ENCODE measurements at regions of chr10 and their contacts with region 1.

Region 1: DNA sequence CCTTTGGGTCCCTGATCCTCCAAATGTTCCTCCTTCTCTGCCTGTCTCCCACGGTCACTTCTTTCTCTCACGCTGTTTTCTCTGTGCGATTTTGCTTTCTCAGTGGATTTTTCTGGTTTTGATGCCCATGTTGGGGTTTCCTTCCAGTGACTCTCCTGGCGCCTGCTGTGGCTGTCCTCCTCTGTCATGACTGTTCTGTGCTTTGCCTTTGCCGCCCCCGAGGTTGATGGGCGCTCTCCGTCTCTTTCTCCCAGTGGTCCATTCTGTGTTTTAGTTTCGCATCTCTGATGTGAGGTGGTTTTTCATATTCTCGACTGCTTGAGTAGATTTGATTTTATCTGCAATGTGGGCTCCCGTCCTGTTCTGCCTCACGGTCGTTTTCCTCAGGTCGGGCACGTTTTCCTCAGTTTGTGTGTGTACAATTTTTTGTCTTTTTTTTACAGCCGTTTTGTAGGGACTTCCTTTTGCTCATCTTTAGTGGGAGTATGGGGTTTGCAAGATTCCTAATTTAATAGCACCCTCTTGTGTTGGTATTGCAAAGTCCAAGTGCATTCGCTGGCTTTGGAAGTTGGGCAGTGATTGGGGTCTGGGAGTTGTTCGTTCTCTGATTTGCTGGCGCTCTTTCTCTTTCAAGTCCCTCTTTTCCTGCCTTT is 100.0 kb downstream of the INPP5A start:
- DNase-seq: no peak
- ATAC-seq: peak; percentile 75

Region 2: DNA sequence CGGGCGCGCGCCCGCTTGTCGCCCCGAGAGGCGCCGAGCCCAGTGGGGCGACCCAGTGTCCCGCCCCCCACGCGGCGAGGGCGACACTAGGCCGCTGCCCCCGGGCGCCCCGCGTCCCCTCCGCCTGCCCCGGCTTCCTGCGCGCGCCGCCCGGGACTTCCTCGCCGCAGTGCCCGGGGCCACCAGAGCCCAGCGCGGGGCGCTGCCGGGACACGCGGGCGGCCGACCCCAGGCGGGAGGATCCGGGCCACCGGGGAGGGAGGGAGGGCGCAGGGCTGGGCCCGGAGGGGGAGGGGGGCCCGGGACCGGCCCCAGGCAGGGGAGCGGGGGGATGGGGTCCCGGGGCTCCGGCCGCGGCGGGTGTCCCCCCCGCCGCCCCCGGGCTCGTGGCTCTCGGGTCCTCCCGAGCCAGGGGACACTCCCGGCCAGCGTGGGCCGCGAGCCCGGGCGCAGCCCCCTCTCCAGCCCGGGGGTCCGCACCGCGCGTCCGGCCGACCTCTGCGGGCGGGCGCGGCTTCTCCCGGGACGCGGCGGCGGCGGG is 241.0 kb before region 1 on chr10:
- intact Hi-C with region 1: loop called (anchors 10 kb)
- DNase-seq: peak; percentile 76
- ATAC-seq: peak; percentile 48

Region 3: GRCh38 chr10:132443605-132443982 is 194.0 kb before region 1 on chr10:
- intact Hi-C with region 1: no loop called
- DNase-seq: no peak
- ATAC-seq: no peak

Region 4: GRCh38 chr10:132458593-132459300 is 178.9 kb before region 1 on chr10:
- intact Hi-C with region 1: loop called (anchors 1 kb)
- DNase-seq: peak; percentile 81
- ATAC-seq: peak; percentile 68

Region 5: DNA sequence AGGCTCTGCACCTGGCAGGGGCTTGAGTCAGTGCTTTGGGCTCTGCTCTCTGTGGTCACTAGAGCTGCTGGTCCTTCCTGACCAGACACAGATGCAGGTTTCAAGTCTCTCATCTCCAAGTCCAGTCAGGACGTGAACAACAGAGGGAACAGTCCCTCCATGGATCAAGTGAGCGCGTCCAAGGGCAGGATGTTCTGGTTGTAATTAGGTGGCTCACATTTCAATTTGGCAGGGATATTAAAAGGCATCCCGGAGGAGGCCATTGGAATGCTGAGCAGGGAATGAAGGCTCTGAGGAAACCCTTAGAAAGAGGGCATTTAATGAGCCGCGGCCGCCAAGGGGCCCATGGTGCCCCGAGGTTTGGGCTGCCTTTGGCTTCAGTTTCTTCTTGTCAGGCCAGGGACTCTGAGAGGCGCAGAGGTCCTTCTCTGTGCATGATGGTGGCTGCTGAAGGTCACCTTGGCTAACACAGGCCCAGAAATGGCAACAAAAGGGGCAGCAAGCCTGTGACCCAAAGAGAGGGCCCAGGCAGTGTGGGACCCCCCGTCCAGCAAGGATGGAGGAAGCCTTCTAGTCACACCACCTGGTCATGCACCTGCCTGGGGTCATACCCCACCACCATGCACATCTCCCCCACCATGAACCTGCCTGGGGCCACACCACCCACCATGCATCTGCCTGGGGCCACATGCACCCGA is 130.7 kb before region 1 on chr10:
- intact Hi-C with region 1: loop called (anchors 2 kb)
- DNase-seq: peak; percentile 51
- ATAC-seq: peak; percentile 45

Region 6: GRCh38 chr10:132516771-132517725 is 120.6 kb before region 1 on chr10:
- intact Hi-C with region 1: loop called (anchors 5 kb)
- DNase-seq: peak; percentile 94
- ATAC-seq: peak; percentile 81

Region 7: DNA sequence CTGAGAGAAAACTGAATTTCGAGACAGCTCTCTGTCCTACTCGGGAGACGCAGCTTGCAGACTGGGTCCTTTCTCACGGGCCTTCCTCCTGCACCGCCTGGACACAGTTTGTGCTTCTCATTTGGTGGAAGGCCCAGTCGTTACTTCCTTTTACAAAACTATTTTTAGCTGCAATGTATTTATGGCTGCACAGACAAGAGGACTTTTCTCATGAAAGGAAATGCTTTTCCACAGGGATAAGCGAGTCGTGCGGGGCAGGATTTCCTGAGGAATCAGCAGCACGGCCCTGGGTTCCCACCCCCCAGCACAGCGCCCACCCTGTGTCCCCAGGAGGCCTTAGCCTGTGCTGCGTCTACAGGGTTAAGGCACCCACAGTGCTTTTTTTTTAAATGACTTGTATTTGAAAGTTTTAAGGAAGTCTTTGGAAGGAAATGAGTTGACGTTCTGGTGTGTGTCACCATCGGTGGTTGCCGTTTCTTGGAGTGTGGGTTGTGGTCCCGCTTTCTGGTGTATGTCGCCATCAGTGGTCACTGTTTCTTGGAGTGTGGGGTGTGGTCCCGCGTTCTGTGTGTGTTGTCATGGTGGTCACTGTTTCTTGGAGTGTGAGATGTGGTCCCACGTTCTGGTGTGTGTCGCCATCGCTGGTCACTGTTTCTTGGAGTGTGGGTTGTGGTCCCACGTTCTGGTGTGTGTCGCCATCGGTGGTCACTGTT is 49.1 kb before region 1 on chr10:
- intact Hi-C with region 1: loop called (anchors 5 kb)
- DNase-seq: no peak
- ATAC-seq: peak; percentile 44

Region 8: GRCh38 chr10:132806561-132807003 is 169.0 kb after region 1 on chr10:
- intact Hi-C with region 1: no loop called
- DNase-seq: peak; percentile 36
- ATAC-seq: no peak